ENCODE measurements at regions of chr2 and their contacts with region 1.

Region 1: DNA sequence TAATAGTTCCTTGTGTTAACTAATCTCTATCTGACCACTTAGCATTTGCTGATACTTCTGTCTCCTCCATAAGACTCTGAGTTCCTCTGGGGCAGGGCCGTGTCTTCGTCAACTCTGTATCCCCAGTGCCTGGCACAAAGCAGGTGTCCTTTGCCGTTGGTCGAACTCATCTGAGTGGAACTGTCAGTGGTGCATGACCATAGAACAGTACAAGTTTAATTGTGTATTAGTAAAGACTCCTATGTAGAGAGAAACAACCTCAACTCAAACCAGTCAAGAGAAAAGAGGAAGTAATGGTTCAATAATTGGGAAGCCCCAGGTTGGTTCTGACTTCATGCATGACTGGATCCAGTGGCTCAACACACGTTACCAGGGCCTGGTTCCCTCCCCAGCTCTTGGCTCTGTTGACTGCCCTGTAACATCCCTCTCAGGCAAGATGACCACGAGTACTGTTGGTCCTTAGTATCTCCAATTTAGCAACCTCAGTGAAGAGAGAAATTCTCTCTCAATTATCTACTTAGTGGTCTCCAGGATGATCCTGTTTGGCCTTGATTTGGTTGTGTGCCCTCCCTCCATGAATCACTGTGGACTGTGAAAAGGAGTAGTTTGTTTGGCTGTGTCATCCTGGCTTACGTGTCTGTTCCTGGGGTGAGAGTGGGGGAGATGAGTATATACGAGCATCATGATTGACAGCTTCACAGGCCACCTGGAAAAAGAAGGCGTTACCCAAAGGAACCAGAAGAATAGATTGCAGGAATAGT is 58.5 kb upstream of the MSH6 start:
- DNase-seq: peak; percentile 94
- ATAC-seq: peak; percentile 88
- H3K4me3 ChIP-seq: peak overlapping the region in 1 of 5 experiments; percentile 22
- H3K4me3 Mint-ChIP-seq: peak overlapping the region; percentile 59
- H3K27ac ChIP-seq: peak overlapping the region; percentile 91 to 92
- H3K27ac Mint-ChIP-seq: peak overlapping the region; percentile 94
- H3K4me1 ChIP-seq: peaks cover 58 to 73% of the 10 kb centered on the region in 2 donors
- H3K4me1 Mint-ChIP-seq: peaks cover 69% of the 10 kb centered on the region
- H3K27me3 ChIP-seq: no peaks in the 10 kb centered on the region
- H3K27me3 Mint-ChIP-seq: no peaks in the 10 kb centered on the region
- CTCF ChIP-seq: no peak

Region 2: GRCh38 chr2:47043142-47043890 is 681.1 kb before region 1 on chr2:
- CTCF ChIA-PET with region 1: no interaction called
- POLR2A ChIA-PET with region 1: no interaction called
- intact Hi-C with region 1: no loop called
- DNase-seq: no peak
- ATAC-seq: no peak
- H3K4me3 ChIP-seq: no peak overlapping the region
- H3K4me3 Mint-ChIP-seq: no peak overlapping the region
- H3K27ac ChIP-seq: peak overlapping the region in 1 of 2 donors; percentile 32
- H3K27ac Mint-ChIP-seq: peak overlapping the region; percentile 63
- H3K4me1 ChIP-seq: peaks cover 29 to 34% of the 10 kb centered on the region in 2 donors
- H3K4me1 Mint-ChIP-seq: peaks cover 39% of the 10 kb centered on the region
- H3K27me3 ChIP-seq: no peaks in the 10 kb centered on the region
- H3K27me3 Mint-ChIP-seq: no peaks in the 10 kb centered on the region
- CTCF ChIP-seq: no peak

Region 3: DNA sequence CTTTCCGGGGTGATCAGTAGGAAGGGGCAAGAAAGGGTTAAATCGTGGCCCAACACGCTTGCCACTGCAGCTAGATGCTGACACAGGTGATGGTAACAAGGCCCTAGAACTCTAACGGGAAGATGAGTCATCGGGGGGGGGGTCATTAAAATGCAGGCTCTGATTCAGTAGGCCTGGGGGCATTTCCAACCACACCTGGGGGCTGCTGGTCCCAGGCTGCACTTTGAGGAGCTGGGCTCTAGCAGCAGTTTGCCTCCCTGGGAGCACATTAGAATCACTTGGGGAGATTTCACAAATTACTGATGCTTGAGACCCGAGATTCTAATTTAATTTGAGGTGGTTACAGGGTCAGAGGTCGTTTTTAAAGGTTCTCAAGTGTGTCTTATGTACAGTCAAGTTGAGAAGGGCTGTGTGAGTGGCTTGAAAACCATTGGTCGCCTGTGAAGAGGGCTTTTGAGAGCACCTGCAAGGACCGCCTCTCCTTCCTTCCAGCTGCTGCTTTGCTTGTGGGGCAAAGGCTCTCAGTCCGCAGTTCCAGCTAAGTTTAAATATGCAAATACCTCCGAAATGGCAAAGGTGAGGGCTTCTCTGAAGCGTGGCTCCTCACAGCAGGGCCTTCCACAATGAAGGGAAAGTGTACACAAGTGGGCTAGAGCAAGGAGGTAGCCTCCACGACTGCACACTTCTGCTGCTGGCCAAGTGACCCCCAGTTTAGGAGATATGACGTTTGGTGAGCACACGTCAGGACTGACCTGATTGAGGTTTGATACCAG is 69.4 kb before region 1 on chr2:
- CTCF ChIA-PET with region 1: no interaction called
- POLR2A ChIA-PET with region 1: interaction called, 6 read pairs
- intact Hi-C with region 1: loop called (anchors 1 kb)
- DNase-seq: peak; percentile 74
- ATAC-seq: peak; percentile 91
- H3K4me3 ChIP-seq: no peak overlapping the region
- H3K4me3 Mint-ChIP-seq: peak overlapping the region; percentile 60
- H3K27ac ChIP-seq: peak overlapping the region; percentile 13 to 67
- H3K27ac Mint-ChIP-seq: peak overlapping the region; percentile 83
- H3K4me1 ChIP-seq: peaks cover 35 to 53% of the 10 kb centered on the region in 2 donors
- H3K4me1 Mint-ChIP-seq: peaks cover 58% of the 10 kb centered on the region
- H3K27me3 ChIP-seq: no peaks in the 10 kb centered on the region
- H3K27me3 Mint-ChIP-seq: no peaks in the 10 kb centered on the region
- CTCF ChIP-seq: no peak

Region 4: GRCh38 chr2:47782671-47783485 is 58.5 kb after region 1 on chr2 and contains the start of gene MSH6:
- CTCF ChIA-PET with region 1: no interaction called
- POLR2A ChIA-PET with region 1: no interaction called
- intact Hi-C with region 1: loop called (anchors 1 kb)
- DNase-seq: peak; percentile 95
- ATAC-seq: peak; percentile 87
- H3K4me3 ChIP-seq: peak within 1 kb of the TSS; percentile 80 to 98 (median 94)
- H3K4me3 Mint-ChIP-seq: peak within 1 kb of the TSS; percentile 95
- H3K27ac ChIP-seq: peak within 1 kb of the TSS; percentile 74 to 85
- H3K27ac Mint-ChIP-seq: peak within 1 kb of the TSS; percentile 94
- H3K4me1 ChIP-seq: peaks cover 14 to 26% of the 10 kb centered on the region in 2 donors
- H3K4me1 Mint-ChIP-seq: peaks cover 18% of the 10 kb centered on the region
- H3K27me3 ChIP-seq: no peaks in the 10 kb centered on the region
- H3K27me3 Mint-ChIP-seq: no peaks in the 10 kb centered on the region
- CTCF ChIP-seq: no peak
- total RNA-seq, gene MSH6: 43.9 and 46.9 TPM in 2 replicates

Region 5: GRCh38 chr2:47798631-47799030 is 74.2 kb after region 1 on chr2:
- CTCF ChIA-PET with region 1: no interaction called
- POLR2A ChIA-PET with region 1: no interaction called
- intact Hi-C with region 1: no loop called
- DNase-seq: no peak
- ATAC-seq: no peak
- H3K4me3 ChIP-seq: no peak overlapping the region
- H3K4me3 Mint-ChIP-seq: no peak overlapping the region
- H3K27ac ChIP-seq: peak overlapping the region in 1 of 2 donors; percentile 25
- H3K27ac Mint-ChIP-seq: no peak overlapping the region
- H3K4me1 ChIP-seq: no peaks in the 10 kb centered on the region
- H3K4me1 Mint-ChIP-seq: no peaks in the 10 kb centered on the region
- H3K27me3 ChIP-seq: no peaks in the 10 kb centered on the region
- H3K27me3 Mint-ChIP-seq: no peaks in the 10 kb centered on the region
- CTCF ChIP-seq: no peak